Spleen (tissue), 13 donors: ENCODE measurements at regions of chr19 and their contacts with region 1.

Region 1: DNA sequence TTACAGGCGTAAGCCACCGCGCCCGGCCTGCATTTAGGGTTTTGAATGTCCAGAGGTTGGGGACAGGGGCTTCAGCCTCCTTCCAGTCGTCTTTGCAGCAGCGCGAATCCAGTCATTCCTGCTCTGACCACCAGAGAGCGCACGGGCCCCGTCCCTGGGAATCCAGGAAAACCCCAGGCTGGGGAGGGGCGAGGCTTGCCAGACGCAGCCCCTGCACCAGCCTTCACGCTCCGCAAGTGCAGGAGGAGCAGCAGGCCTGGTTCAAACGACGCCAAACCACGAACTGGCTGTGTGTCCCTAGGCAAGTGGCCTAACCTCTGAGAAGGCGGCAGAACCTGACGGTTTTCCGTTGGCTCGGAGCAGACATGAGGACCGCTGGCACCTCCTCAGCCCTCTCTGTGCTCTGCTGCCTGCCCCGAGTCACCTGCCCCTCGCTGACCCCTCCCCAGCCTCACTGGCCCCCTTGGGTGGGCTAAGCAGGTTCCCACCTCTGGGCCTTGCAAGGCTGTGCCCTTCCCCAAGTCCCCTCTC is 2.0 kb upstream of the RNF126 start:
- DNase-seq: peak; percentile 92
- H3K4me3 ChIP-seq: peak overlapping the region in 4 of 8 donors; percentile 2 to 56 (median 10)
- H3K27ac ChIP-seq: peak overlapping the region in 4 of 8 donors; percentile 39 to 98 (median 58)
- H3K4me1 ChIP-seq: peaks cover 27 to 62% (median 42%) of the 10 kb centered on the region in 6 donors
- H3K27me3 ChIP-seq: peaks cover 0 to 4% (median 0%) of the 10 kb centered on the region in 7 donors
- CTCF ChIP-seq: peak; percentile 80 to 94 (median 91)
- POLR2A ChIP-seq: no peak

Region 2: DNA sequence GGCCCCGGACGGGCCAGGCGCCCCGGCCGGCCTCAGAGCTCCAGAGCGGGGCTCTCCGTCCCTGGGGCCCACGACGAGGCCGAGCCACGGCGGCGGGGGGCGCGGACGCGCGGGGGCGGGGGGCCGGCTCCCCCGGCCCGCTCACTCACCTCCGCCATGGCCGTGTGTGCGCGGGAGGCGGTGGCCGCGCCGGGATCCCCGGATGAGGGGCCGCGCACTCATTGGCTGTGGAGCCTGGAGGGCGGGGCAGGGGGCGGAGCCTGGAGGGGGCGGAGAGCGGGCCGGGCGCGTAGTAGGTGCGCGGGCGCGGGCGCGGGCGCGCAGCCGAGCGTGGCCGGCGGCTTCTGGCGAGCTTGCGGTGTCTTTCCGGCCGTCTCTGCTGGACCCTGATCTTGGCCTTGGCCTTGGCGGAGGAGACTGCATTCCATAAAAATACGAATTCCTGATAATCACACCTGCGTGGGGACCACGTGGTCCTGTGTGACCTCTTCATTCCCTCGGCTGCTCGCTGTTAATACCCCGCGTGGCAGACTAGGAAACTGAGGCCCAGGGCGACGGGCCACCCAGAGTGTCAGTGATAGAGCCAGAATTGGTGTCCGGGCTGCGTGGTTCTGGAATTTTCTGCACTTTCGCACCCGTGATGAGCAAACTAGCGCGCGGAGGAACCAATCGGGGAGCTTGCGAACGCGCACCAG is 320.2 kb before region 1 on chr19 and contains the start of gene MIER2:
- intact Hi-C with region 1: no loop called
- DNase-seq: peak; percentile 91
- H3K4me3 ChIP-seq: peak within 1 kb of the TSS; percentile 49 to 95 (median 73)
- H3K27ac ChIP-seq: peak within 1 kb of the TSS; percentile 44 to 87 (median 75)
- H3K4me1 ChIP-seq: peaks cover 14 to 50% (median 47%) of the 10 kb centered on the region in 6 donors
- H3K27me3 ChIP-seq: peaks cover 0 to 11% (median 0%) of the 10 kb centered on the region in 7 donors
- CTCF ChIP-seq: no peak
- POLR2A ChIP-seq: no peak
- total RNA-seq, gene MIER2: 26.8 to 66.5 (median 30.1) TPM

Region 3: GRCh38 chr19:732148-733069 is 67.4 kb after region 1 on chr19:
- intact Hi-C with region 1: loop called (anchors 5 kb)
- DNase-seq: no peak
- H3K4me3 ChIP-seq: no peak overlapping the region
- H3K27ac ChIP-seq: peak overlapping the region in 2 of 8 donors; percentile 48 to 63
- H3K4me1 ChIP-seq: peaks cover 0 to 54% (median 31%) of the 10 kb centered on the region in 6 donors
- H3K27me3 ChIP-seq: no peaks in the 10 kb centered on the region
- CTCF ChIP-seq: no peak
- POLR2A ChIP-seq: no peak